Left ventricle myocardium superior (tissue), 1 donor: ENCODE measurements at regions of chr16 and their contacts with region 1.

Region 1: GRCh38 chr16:47141773-47142485 is 1.8 kb downstream of the NETO2 start:
- DNase-seq: peak; percentile 79
- ATAC-seq: peak; percentile 88

Region 2: DNA sequence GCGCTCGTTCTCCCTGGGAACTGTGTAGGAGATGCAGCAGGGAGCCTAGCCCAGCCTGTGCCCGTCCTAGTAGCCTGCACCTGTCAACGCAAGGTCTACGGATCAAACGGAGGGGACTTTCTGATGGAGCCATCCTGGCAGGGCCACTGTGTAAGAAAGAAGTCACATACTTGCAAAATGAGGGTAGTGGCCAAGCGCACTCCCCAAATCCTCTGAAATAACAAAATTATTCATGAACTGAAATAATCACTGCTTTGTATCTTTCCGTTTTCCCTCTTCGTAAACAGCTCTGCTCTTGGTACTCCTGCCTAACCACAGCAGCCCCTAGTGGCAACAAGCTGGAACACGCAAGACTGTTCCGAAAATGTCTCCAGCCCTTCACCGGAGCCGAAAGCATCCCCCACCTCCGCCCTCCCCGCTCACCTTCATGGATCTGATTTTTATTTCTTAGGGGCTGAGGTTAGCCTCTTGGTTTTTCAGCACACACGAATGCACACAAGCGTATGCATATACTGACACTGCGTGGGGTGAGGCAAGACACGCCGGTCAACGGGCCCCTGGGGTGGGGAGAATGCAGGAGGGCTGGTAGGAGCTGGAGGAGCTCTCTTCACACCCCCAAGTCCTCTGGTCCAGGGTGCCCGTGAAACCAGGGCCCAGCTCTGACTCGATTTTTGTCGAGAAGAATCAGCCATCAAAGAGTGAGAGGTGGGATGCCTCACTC is 913.1 kb after region 1 on chr16:
- intact Hi-C with region 1: loop called (anchors 10 kb)
- DNase-seq: peak; percentile 46
- ATAC-seq: peak; percentile 80

Region 3: GRCh38 chr16:48156790-48157209 is 1014.9 kb after region 1 on chr16:
- intact Hi-C with region 1: loop called (anchors 5 kb)
- DNase-seq: peak; percentile 91
- ATAC-seq: peak; percentile 90